ENCODE measurements at regions of chr12 and their contacts with region 1.

Region 1: GRCh38 chr12:76559400-76560085 is at the start of gene OSBPL8:
- DNase-seq: peak; percentile 85 to 98 (median 91)
- ATAC-seq: peak; percentile 88
- H3K4me3 ChIP-seq: peak within 1 kb of the TSS; percentile 97
- H3K4me3 Mint-ChIP-seq: peak within 1 kb of the TSS; percentile 88 to 99 (median 96)
- H3K27ac ChIP-seq: peak within 1 kb of the TSS; percentile 96
- H3K27ac Mint-ChIP-seq: peak within 1 kb of the TSS; percentile 91 to 98 (median 98)
- H3K4me1 ChIP-seq: peaks cover 21 to 29% of the 10 kb centered on the region in 2 donors
- H3K4me1 Mint-ChIP-seq: peaks cover 20 to 45% (median 35%) of the 10 kb centered on the region in 7 donors
- H3K27me3 ChIP-seq: no peaks in the 10 kb centered on the region
- H3K27me3 Mint-ChIP-seq: no peaks in the 10 kb centered on the region
- total RNA-seq, gene OSBPL8: 113 to 146 (median 119) TPM

Region 2: DNA sequence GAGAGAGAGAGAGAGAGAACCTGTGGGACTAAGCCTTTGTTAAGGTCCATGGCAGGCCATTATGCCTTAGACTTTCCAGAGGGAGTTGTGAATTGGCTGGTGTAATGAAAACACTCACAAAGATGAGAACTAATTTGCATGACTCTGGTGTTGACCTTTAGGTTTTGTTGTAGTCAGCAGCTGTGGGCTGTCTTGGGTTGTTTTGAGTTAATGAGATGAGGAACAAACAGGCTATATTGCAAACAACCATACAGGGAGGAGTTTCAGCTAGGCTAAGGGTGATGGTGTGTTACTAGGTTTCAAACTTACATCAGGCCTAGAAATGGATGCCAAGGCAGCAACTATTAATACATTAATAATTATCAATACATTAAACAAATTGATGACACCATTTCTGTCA is 1995.6 kb before region 1 on chr12:
- CTCF ChIA-PET with region 1: no interaction called
- POLR2A ChIA-PET with region 1: no interaction called
- intact Hi-C with region 1: no loop called
- DNase-seq: no peak
- ATAC-seq: no peak
- H3K4me3 ChIP-seq: no peak overlapping the region
- H3K4me3 Mint-ChIP-seq: no peak overlapping the region
- H3K27ac ChIP-seq: no peak overlapping the region
- H3K27ac Mint-ChIP-seq: no peak overlapping the region
- H3K4me1 ChIP-seq: no peaks in the 10 kb centered on the region
- H3K4me1 Mint-ChIP-seq: no peaks in the 10 kb centered on the region
- H3K27me3 ChIP-seq: no peaks in the 10 kb centered on the region
- H3K27me3 Mint-ChIP-seq: peaks cover 0 to 16% (median 13%) of the 10 kb centered on the region in 5 donors

Region 3: DNA sequence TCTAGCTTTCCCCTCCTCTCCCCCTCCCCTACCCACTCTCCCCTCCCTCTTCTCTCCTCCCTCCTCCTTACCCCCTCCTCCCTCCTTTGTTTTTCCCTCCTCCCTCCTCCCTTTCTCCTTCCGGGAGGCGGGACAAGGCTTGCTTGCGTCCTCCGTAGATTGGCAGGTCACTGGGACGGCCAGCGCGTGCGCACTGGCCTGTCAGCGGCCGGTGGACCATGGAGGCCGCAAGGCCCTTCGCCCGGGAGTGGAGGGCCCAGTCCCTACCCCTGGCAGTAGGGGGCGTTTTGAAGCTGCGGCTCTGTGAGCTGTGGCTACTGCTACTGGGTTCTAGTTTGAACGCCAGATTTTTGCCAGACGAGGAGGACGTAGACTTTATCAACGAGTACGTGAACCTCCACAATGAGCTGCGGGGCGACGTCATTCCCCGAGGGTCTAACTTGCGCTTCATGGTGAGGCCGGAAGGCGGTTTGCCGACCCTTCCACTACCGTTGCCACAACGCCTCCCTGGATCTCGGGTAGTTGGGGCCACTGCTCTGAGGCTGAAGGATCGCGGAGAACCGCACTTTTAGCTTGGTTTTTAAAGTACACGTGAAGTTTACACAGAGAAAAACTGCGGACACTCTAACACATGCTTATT is 1168.5 kb before region 1 on chr12 and contains the start of gene GLIPR1L2:
- CTCF ChIA-PET with region 1: no interaction called
- POLR2A ChIA-PET with region 1: interaction called, 5 read pairs
- intact Hi-C with region 1: loop called (anchors 1 to 2 kb)
- DNase-seq: peak; percentile 75 to 86 (median 80)
- ATAC-seq: peak; percentile 96
- H3K4me3 ChIP-seq: peak within 1 kb of the TSS; percentile 67
- H3K4me3 Mint-ChIP-seq: peak within 1 kb of the TSS; percentile 87 to 98 (median 94)
- H3K27ac ChIP-seq: peak within 1 kb of the TSS; percentile 79
- H3K27ac Mint-ChIP-seq: peak within 1 kb of the TSS; percentile 93 to 99 (median 98)
- H3K4me1 ChIP-seq: peaks cover 14 to 19% of the 10 kb centered on the region in 2 donors
- H3K4me1 Mint-ChIP-seq: peaks cover 26 to 61% (median 44%) of the 10 kb centered on the region in 7 donors
- H3K27me3 ChIP-seq: no peaks in the 10 kb centered on the region
- H3K27me3 Mint-ChIP-seq: peaks cover 0 to 3% (median 0%) of the 10 kb centered on the region in 5 donors
- total RNA-seq, gene GLIPR1L2: 0.22 to 2.3 (median 0.38) TPM

Region 4: DNA sequence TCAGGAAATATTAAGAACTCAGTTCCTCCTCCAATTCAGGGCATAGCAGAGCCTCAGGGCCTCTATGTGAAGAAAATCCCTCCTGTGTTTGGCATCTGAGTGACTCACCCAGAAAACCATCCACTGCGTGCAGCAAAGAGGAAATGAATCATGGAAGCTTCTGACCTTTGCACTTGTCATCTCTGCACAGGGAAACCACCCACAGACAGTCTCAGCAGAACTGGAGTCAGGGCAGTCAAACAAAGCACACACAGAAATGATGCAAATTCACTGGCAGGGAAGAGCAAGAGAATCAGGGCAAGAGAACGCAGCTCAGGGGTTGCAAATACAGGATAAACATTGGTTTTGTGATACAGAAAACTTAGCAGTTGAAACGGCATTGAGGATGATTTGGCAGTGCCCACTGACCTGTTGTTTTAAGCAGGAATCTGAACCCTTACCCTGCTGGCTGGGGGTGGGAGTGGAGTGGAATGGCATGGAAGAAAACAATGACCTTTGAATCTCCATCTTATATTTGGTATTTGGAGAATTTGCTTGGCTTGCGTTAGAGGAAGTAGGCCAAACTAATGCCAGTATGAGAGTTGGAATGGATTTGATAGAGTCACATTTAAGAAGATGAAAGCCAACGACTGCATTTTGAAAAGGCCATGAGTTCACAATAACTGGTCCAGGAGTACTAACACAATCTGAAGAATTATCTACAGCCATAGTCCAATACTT is 581.4 kb before region 1 on chr12:
- CTCF ChIA-PET with region 1: no interaction called
- POLR2A ChIA-PET with region 1: no interaction called
- intact Hi-C with region 1: loop called (anchors 1 to 2 kb)
- DNase-seq: peak in 8 of 9 donors; percentile 4 to 80 (median 38)
- ATAC-seq: peak; percentile 94
- H3K4me3 ChIP-seq: no peak overlapping the region
- H3K4me3 Mint-ChIP-seq: peak overlapping the region in 7 of 10 donors; percentile 24 to 64 (median 51)
- H3K27ac ChIP-seq: peak overlapping the region; percentile 21
- H3K27ac Mint-ChIP-seq: peak overlapping the region; percentile 41 to 90 (median 74)
- H3K4me1 ChIP-seq: peaks cover 15 to 26% of the 10 kb centered on the region in 2 donors
- H3K4me1 Mint-ChIP-seq: peaks cover 21 to 58% (median 26%) of the 10 kb centered on the region in 7 donors
- H3K27me3 ChIP-seq: no peaks in the 10 kb centered on the region
- H3K27me3 Mint-ChIP-seq: no peaks in the 10 kb centered on the region

Region 5: DNA sequence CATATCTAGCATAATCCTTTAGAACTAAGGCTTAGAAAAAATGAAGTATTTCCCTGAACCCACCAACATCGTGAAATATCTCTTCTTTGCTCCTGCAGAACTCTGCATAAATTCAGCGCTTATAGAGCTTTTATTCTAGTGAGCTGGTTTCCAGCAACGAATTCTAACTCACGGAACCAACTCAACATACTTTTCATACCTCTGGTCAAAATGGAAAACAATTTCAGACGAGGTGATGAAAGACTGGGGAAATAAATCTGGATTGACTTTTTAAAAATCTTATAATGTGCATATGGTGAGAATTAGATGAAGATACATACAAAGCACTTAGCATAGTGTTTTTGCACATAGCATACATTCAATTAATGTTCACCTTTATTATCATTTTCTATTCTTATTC is 148.8 kb before region 1 on chr12:
- CTCF ChIA-PET with region 1: no interaction called
- POLR2A ChIA-PET with region 1: no interaction called
- intact Hi-C with region 1: loop called (anchors 5 kb)
- DNase-seq: no peak
- ATAC-seq: no peak
- H3K4me3 ChIP-seq: no peak overlapping the region
- H3K4me3 Mint-ChIP-seq: no peak overlapping the region
- H3K27ac ChIP-seq: no peak overlapping the region
- H3K27ac Mint-ChIP-seq: peak overlapping the region in 1 of 9 donors; percentile 6
- H3K4me1 ChIP-seq: peaks cover 0 to 3% of the 10 kb centered on the region in 2 donors
- H3K4me1 Mint-ChIP-seq: peaks cover 4 to 27% (median 13%) of the 10 kb centered on the region in 7 donors
- H3K27me3 ChIP-seq: no peaks in the 10 kb centered on the region
- H3K27me3 Mint-ChIP-seq: no peaks in the 10 kb centered on the region

Region 6: DNA sequence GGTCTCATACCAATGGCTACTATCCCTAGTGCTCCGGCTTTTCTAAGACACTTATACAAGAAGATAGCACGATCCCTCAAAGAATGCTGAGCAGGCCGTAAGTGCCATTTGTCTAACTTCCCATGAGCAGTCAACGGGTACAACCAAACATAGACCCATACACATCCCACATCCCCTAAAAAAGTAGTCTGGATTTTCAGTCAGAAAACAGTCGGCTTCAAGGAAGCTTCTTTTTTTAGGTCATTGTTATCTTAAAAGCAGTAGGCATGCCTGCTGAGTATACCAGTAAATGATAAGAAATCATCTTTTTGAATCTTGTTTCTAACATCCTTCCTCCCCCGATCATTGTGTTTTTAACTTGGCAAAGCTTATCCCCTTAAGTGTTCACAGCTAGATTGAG is 19.8 kb before region 1 on chr12:
- CTCF ChIA-PET with region 1: no interaction called
- POLR2A ChIA-PET with region 1: interaction called, 11 read pairs
- intact Hi-C with region 1: loop called (anchors 1 to 2 kb)
- DNase-seq: no peak
- ATAC-seq: no peak
- H3K4me3 ChIP-seq: no peak overlapping the region
- H3K4me3 Mint-ChIP-seq: peak overlapping the region in 7 of 10 donors; percentile 18 to 57 (median 50)
- H3K27ac ChIP-seq: no peak overlapping the region
- H3K27ac Mint-ChIP-seq: peak overlapping the region in 5 of 9 donors; percentile 31 to 78 (median 34)
- H3K4me1 ChIP-seq: peaks cover 14 to 17% of the 10 kb centered on the region in 2 donors
- H3K4me1 Mint-ChIP-seq: peaks cover 26 to 79% (median 61%) of the 10 kb centered on the region in 7 donors
- H3K27me3 ChIP-seq: no peaks in the 10 kb centered on the region
- H3K27me3 Mint-ChIP-seq: no peaks in the 10 kb centered on the region

Region 7: DNA sequence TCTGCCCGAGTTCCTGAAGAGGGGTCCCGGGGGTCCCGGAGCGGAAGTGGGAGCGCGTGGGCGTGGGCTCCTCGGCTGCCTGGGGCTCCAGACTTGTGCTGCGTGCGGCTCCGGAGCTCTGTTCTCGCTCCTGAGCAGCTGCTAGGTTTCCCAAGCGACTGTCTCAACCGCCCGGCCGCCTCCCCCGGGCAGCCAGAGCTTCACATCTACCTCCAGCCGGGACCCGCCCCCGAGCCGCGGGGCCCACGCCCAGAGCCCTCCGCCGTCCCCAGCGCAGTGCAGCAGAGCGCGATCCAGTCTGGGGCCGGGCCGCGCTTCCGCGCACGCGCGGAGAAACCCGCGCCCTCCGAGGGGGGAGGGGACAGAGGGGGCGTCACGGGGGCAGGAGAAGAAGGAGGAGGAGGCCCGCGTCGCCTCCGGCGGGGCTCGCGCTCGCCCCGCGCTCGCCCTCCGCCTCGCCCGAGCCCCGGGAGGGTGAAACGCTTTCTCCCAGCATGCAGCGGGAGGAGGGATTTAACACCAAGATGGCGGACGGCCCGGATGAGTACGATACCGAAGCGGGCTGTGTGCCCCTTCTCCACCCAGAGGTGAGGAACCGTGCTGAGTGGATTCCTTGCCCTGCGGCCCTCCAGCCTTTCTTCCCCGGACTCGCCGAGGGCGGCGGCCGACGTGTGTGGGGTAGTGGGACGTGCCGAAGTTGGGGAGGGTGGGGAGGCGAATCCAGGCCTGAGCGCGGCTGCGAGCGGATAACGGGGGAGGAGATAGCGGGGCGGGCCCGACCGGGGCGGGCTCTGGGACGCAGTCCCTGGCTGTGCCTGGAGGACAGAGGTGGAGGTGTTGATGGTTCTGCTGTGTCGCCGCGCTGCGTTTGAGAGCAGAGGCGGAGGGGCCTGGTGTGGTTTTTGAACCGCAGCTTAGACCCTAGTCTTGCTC is 204.5 kb after region 1 on chr12 and contains the start of gene ZDHHC17:
- CTCF ChIA-PET with region 1: no interaction called
- POLR2A ChIA-PET with region 1: interaction called, 3 read pairs
- intact Hi-C with region 1: loop called (anchors 1 kb)
- DNase-seq: peak; percentile 90 to 95 (median 93)
- ATAC-seq: peak; percentile 90
- H3K4me3 ChIP-seq: peak within 1 kb of the TSS; percentile 84
- H3K4me3 Mint-ChIP-seq: peak within 1 kb of the TSS; percentile 92 to 98 (median 97)
- H3K27ac ChIP-seq: peak within 1 kb of the TSS; percentile 94
- H3K27ac Mint-ChIP-seq: peak within 1 kb of the TSS; percentile 95 to 99 (median 97)
- H3K4me1 ChIP-seq: peaks cover 8 to 13% of the 10 kb centered on the region in 2 donors
- H3K4me1 Mint-ChIP-seq: peaks cover 17 to 57% (median 46%) of the 10 kb centered on the region in 7 donors
- H3K27me3 ChIP-seq: no peaks in the 10 kb centered on the region
- H3K27me3 Mint-ChIP-seq: peaks cover 0 to 13% (median 0%) of the 10 kb centered on the region in 5 donors
- total RNA-seq, gene ZDHHC17: 27.3 to 60.9 (median 56.3) TPM

Region 8: GRCh38 chr12:77760271-77761025 is 1200.9 kb after region 1 on chr12:
- CTCF ChIA-PET with region 1: no interaction called
- POLR2A ChIA-PET with region 1: no interaction called
- intact Hi-C with region 1: no loop called
- DNase-seq: no peak
- ATAC-seq: no peak
- H3K4me3 ChIP-seq: no peak overlapping the region
- H3K4me3 Mint-ChIP-seq: no peak overlapping the region
- H3K27ac ChIP-seq: no peak overlapping the region
- H3K27ac Mint-ChIP-seq: no peak overlapping the region
- H3K4me1 ChIP-seq: no peaks in the 10 kb centered on the region
- H3K4me1 Mint-ChIP-seq: no peaks in the 10 kb centered on the region
- H3K27me3 ChIP-seq: no peaks in the 10 kb centered on the region
- H3K27me3 Mint-ChIP-seq: no peaks in the 10 kb centered on the region

Measured in naive thymus-derived CD4-positive, alpha-beta T cell (primary cell).